Mammary epithelial cell (primary cell): ENCODE measurements at regions of chr1 and their contacts with region 1.

Region 1: DNA sequence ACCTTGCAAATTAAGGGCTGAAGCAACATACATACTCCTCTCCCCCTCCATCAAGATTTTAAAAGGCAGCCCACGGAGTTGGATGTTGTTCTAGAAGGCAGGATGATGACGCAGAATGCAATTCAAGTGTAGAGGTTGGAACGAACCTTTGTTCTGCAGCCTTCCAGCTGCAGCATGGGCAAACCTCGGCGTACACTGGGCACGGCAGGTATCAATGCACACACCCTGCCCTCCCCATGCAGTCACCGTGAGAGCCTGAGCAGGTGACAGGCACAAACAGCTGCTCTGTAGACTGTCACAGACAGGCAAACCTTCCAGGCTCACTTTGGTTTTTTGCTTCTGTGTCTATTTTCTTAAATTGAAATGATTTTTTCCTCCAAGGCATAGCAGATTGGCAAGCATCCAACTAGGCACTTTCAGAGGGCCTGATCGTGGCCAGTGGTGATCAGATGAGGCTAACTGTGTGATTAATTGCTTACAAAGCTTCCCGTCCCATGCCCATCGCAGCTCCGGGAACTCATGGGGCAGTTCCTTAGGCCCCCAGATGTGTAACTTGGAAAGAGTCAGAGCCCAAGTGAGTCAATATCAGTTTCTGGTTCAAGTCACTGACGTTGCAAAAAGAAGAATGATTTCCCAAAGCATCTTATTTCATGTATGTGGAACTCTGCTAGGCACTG is 82.3 kb downstream of the ITPKB start:
- DNase-seq: peak; percentile 90
- H3K4me3 ChIP-seq: no peak overlapping the region
- H3K27ac ChIP-seq: peak overlapping the region; percentile 73
- H3K4me1 ChIP-seq: peaks cover 38% of the 10 kb centered on the region
- H3K27me3 ChIP-seq: no peaks in the 10 kb centered on the region
- CTCF ChIP-seq: no peak

Region 2: GRCh38 chr1:226634166-226634588 is 22.6 kb before region 1 on chr1:
- CTCF ChIA-PET with region 1: no interaction called
- dilution Hi-C with region 1: no loop called
- in situ Hi-C with region 1: no loop called
- intact Hi-C with region 1: no loop called
- DNase-seq: peak; percentile 32
- H3K4me3 ChIP-seq: no peak overlapping the region
- H3K27ac ChIP-seq: no peak overlapping the region
- H3K4me1 ChIP-seq: peaks cover 7% of the 10 kb centered on the region
- H3K27me3 ChIP-seq: no peaks in the 10 kb centered on the region
- CTCF ChIP-seq: peak; percentile 73 to 96

Region 3: DNA sequence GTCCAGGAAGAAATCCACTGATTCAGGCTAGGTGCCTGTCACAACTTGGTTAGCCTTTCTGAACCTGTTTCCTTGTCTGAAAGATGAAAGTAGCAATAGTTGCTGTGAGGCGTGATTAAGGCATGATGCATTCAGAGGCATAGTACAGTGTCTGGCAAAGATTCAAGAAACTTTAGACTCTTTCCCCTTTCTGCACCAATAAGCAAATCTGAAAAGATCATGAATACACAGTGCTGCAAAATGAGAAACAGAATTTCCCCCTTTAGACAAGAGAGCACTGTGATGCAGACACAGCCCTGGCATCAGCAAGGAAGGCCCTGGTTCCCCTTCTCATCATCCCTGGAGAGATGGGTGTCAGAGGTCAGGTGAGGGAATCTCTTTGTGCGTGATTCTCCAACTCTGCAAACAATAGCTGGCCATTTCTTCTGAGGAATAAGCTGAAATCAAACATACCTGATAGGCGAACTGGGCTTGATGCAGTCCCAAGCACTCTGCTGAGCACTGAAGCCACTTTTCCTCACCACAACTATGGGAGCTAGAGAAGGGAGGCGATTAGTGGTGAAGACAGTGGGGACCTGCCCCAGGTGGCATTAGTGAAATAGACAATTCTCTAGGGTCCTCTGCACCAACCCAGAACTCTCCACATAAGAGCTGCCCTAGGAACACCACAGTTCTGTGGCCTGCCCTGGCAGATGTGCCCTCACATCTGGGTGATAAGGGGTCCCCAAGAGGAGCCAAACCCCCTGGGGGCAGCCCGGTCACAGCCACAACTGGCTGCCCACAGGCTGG is 40.6 kb after region 1 on chr1:
- CTCF ChIA-PET with region 1: no interaction called
- dilution Hi-C with region 1: no loop called
- in situ Hi-C with region 1: no loop called
- intact Hi-C with region 1: loop called (anchors 5 kb)
- DNase-seq: peak; percentile 92
- H3K4me3 ChIP-seq: no peak overlapping the region
- H3K27ac ChIP-seq: peak overlapping the region; percentile 44
- H3K4me1 ChIP-seq: peaks cover 30% of the 10 kb centered on the region
- H3K27me3 ChIP-seq: no peaks in the 10 kb centered on the region
- CTCF ChIP-seq: no peak

Region 4: DNA sequence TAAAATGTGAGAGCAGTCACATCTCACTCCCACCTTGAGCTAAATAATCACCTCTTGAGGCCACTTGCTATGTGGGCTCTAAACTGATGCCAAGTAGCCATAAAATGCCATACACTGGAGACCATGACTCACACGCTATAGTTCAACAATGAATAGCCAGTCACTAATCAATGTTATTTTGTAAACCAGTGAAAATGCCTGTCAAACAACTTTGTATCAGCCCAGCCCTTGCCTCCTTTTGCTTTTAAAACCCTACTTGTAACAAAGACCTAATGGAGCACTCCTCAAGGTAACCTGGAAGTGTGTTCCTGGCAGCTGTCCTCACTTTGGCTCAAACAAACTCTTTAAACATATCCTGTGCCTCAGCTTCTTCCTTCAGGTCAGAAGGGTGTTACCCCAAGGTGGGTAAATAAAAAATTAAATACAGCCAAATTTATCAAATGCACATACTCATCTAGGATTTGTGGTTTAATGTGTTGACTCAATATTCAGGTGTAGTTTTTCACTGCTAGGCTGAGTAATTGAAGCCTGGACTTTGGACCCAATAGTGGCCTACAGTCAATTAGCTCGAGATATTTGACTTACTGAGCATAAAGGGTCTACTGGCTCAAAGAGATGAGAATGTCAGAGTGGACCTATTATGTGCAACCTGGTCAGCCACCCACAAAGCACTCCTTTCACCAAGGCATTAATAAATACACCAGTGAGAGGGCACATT is 437.7 kb after region 1 on chr1:
- CTCF ChIA-PET with region 1: no interaction called
- dilution Hi-C with region 1: no loop called
- in situ Hi-C with region 1: no loop called
- intact Hi-C with region 1: no loop called
- DNase-seq: no peak
- H3K4me3 ChIP-seq: no peak overlapping the region
- H3K27ac ChIP-seq: no peak overlapping the region
- H3K4me1 ChIP-seq: no peaks in the 10 kb centered on the region
- H3K27me3 ChIP-seq: no peaks in the 10 kb centered on the region
- CTCF ChIP-seq: no peak